ENCODE measurements at regions of chr3 and their contacts with region 1.

Region 1: GRCh38 chr3:38496131-38496910 is at the start of gene EXOG:
- DNase-seq: peak; percentile 97 to 98
- ATAC-seq: peak; percentile 95 to 98 (median 96)
- H3K4me3 ChIP-seq: peak within 1 kb of the TSS; percentile 90
- H3K27ac ChIP-seq: peak within 1 kb of the TSS; percentile 67
- H3K4me1 ChIP-seq: peaks cover 37% of the 10 kb centered on the region
- H3K27me3 ChIP-seq: no peaks in the 10 kb centered on the region
- CTCF ChIP-seq: peak; percentile 85
- total RNA-seq, gene EXOG: 2.9 to 14.5 (median 6.1) TPM

Region 2: GRCh38 chr3:38623539-38623938 is 127.2 kb after region 1 on chr3:
- intact Hi-C with region 1: no loop called
- DNase-seq: no peak
- ATAC-seq: no peak
- H3K4me3 ChIP-seq: no peak overlapping the region
- H3K27ac ChIP-seq: no peak overlapping the region
- H3K4me1 ChIP-seq: no peaks in the 10 kb centered on the region
- H3K27me3 ChIP-seq: no peaks in the 10 kb centered on the region
- CTCF ChIP-seq: no peak

Region 3: GRCh38 chr3:38651154-38651789 is 155.0 kb after region 1 on chr3:
- intact Hi-C with region 1: no loop called
- DNase-seq: peak; percentile 67 to 80
- ATAC-seq: peak; percentile 68 to 90 (median 83)
- H3K4me3 ChIP-seq: no peak overlapping the region
- H3K27ac ChIP-seq: no peak overlapping the region
- H3K4me1 ChIP-seq: peaks cover 7% of the 10 kb centered on the region
- H3K27me3 ChIP-seq: peaks cover 0 to 48% (median 9%) of the 10 kb centered on the region in 3 donors
- CTCF ChIP-seq: peak; percentile 97

Region 4: DNA sequence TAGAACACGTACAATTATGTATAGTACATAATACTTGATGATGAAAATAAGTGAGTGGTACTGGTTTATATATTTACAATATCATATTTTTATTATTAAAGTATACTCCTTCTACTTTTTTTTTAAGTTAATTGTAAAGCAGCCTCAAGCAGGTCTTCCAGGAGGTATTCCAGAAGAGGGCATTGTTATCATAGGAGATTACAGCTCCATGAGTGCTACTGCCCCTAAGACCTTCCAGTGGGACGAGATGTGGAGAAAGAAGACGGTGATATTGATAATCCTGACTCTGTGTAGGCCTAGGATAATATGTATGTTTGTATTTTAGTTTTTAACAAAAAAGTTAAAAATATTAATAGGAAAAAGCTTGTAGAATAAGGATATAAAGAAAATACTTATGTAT is 193.5 kb after region 1 on chr3:
- intact Hi-C with region 1: no loop called
- DNase-seq: no peak
- ATAC-seq: no peak
- H3K4me3 ChIP-seq: no peak overlapping the region
- H3K27ac ChIP-seq: no peak overlapping the region
- H3K4me1 ChIP-seq: no peaks in the 10 kb centered on the region
- H3K27me3 ChIP-seq: no peaks in the 10 kb centered on the region
- CTCF ChIP-seq: no peak

Region 5: GRCh38 chr3:38843898-38844297 is 347.6 kb after region 1 on chr3:
- intact Hi-C with region 1: loop called in 1 of 2 experiments (anchors 10 kb)
- DNase-seq: no peak
- ATAC-seq: no peak
- H3K4me3 ChIP-seq: no peak overlapping the region
- H3K27ac ChIP-seq: no peak overlapping the region
- H3K4me1 ChIP-seq: no peaks in the 10 kb centered on the region
- H3K27me3 ChIP-seq: no peaks in the 10 kb centered on the region
- CTCF ChIP-seq: peak; percentile 19

Measured in psoas muscle (tissue), 8 donors.